Natural killer cell (primary cell): ENCODE measurements at regions of chr6 and their contacts with region 1.

Region 1: GRCh38 chr6:52020945-52021570 is 66.4 kb downstream of the PKHD1 start:
- DNase-seq: peak in 1 of 2 donors; percentile 51
- ATAC-seq: no peak
- H3K4me3 ChIP-seq: no peak overlapping the region
- H3K4me3 Mint-ChIP-seq: no peak overlapping the region
- H3K27ac ChIP-seq: no peak overlapping the region
- H3K27ac Mint-ChIP-seq: no peak overlapping the region
- H3K4me1 ChIP-seq: no peaks in the 10 kb centered on the region
- H3K4me1 Mint-ChIP-seq: no peaks in the 10 kb centered on the region
- H3K27me3 ChIP-seq: no peaks in the 10 kb centered on the region
- H3K27me3 Mint-ChIP-seq: peaks cover 2 to 15% of the 10 kb centered on the region in 2 donors
- CTCF ChIP-seq: peak; percentile 86

Region 2: DNA sequence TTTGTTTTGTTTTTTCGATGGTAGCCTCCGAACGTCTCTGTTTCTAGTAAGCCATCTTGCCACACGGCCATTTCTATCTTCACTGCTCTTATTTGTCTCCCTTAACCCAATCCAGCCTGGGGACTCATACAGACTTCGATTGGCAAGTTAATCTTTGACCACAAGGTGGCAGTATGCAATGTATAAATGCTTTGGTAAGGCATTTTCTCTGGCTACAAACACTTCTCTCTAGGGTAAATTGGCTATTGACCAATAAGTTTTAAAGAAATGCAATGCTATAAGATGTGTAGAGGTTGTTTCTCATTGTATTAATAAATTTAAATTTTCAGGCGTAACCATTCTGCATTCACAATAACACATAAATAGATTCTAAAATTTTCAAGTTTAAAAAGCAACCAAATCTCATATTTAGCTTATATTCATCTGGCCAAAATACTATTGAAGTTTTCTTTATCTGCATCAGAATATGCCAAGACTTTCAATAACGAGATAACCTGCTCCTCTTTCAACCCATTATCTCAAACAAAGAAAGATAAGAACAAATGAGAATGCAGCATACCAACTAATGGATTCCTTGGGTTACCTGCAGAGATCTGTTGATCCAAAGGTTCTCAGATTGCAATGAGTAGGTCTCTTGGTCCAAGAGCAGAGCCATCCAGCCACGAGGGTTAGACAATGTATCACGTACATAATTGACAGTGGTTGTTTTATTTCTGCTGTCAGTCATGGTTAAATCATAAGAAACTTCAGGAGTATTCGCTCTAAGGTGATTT is 165.6 kb before region 1 on chr6:
- intact Hi-C with region 1: loop called (anchors 10 kb)
- DNase-seq: peak in 1 of 2 donors; percentile 60
- ATAC-seq: no peak
- H3K4me3 ChIP-seq: no peak overlapping the region
- H3K4me3 Mint-ChIP-seq: no peak overlapping the region
- H3K27ac ChIP-seq: no peak overlapping the region
- H3K27ac Mint-ChIP-seq: no peak overlapping the region
- H3K4me1 ChIP-seq: no peaks in the 10 kb centered on the region
- H3K4me1 Mint-ChIP-seq: no peaks in the 10 kb centered on the region
- H3K27me3 ChIP-seq: no peaks in the 10 kb centered on the region
- H3K27me3 Mint-ChIP-seq: no peaks in the 10 kb centered on the region
- CTCF ChIP-seq: peak; percentile 52